Activated CD4-positive, alpha-beta memory T cell treated with anti-CD3 and anti-CD28 coated beads, Interleukin-2, amount 10 ng/mL, durations not matched to agents 7 days and 5 days (primary cell): ENCODE measurements at regions of chr9 and their contacts with region 1.

Region 1: GRCh38 chr9:124852829-124853531 is at the start of gene WDR38:
- DNase-seq: peak; percentile 76
- H3K4me3 Mint-ChIP-seq: peak within 1 kb of the TSS; percentile 56
- H3K27ac Mint-ChIP-seq: no peak within 1 kb of the TSS
- H3K4me1 Mint-ChIP-seq: peaks cover 17% of the 10 kb centered on the region
- H3K27me3 Mint-ChIP-seq: peaks cover 10% of the 10 kb centered on the region
- total RNA-seq, gene WDR38: not detected

Region 2: DNA sequence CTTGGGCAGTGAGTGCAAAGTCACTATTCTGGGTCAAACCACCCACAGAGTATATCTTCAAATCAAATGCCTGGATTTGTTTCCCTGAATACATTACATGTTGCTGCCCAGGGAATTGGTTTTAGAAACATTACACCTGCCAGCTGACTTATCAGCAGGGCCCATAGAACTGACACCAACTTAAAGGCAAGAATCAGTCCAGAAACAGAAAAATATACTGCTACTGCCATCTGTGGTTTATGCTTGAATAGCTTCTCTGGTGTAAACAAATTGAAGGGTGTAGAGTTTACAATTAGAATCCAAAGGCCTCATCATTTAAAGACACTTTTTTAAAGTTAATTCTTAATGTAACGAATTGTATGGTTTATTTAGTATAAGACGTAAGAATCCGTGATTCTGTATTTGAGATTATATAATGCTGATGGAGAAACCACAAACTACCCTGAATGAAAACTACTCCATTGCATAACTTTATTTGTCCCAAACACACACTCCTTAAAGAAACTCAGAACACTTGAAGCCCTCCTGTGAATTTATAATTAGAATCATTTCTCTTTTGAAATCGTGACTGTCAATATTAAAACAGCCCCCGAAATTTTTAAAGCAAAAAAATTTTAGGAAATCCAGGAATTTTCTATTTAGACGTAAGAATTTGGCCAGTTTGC is 88.1 kb before region 1 on chr9:
- CTCF ChIA-PET with region 1: interaction called, 264 read pairs
- POLR2A ChIA-PET with region 1: interaction called, 66 read pairs
- DNase-seq: no peak
- H3K4me3 Mint-ChIP-seq: no peak overlapping the region
- H3K27ac Mint-ChIP-seq: no peak overlapping the region
- H3K4me1 Mint-ChIP-seq: peaks cover 10% of the 10 kb centered on the region
- H3K27me3 Mint-ChIP-seq: peaks cover 82% of the 10 kb centered on the region

Region 3: GRCh38 chr9:124779362-124780059 is 73.5 kb before region 1 on chr9:
- CTCF ChIA-PET with region 1: interaction called, 264 read pairs
- POLR2A ChIA-PET with region 1: interaction called, 66 read pairs
- DNase-seq: peak; percentile 7
- H3K4me3 Mint-ChIP-seq: no peak overlapping the region
- H3K27ac Mint-ChIP-seq: no peak overlapping the region
- H3K4me1 Mint-ChIP-seq: peaks cover 13% of the 10 kb centered on the region
- H3K27me3 Mint-ChIP-seq: peaks cover 28% of the 10 kb centered on the region

Region 4: DNA sequence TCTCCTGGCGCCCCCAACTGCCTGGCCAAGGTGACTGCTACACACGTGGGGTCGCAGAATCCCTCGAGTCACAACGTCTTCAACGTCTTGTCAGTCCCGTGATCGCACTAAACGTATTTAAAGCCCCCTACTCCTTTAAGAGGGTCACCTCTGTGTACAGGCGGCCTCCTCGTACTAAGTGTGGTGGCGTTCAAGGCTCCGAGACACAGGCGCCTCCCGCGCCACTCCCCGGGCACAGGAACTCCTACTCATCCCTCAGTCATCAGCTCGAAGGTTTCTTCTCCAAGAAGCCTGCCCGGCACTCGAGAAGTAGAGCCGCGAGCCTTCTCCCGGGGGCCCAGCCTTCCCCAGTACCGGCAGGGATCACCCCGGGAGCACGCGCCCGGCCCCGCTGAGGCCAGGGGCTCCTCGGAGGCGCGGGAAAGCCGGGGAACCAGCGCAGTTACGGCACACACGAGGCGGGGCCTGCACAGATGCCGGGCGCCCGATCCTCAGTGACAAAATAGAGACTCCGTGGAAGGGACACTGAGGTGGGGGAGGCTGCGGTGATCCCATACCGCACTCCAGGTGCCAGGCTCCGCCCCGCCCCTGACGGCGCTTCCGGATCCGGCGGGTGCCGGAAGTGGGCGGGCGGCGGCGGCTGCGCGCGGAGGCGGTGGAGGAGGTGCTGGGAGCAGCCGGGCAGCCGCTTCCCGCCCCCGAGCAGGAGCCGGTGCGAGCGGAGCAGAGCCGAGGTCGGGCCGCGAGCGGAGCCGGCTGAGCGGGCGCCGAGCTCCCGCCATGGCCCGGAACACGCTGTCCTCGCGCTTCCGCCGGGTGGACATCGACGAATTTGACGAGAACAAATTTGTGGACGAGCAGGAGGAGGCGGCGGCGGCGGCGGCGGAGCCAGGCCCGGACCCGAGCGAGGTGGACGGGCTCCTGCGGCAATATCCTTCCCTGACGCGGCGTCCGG is 15.8 kb after region 1 on chr9:
- CTCF ChIA-PET with region 1: interaction called, 16 read pairs
- POLR2A ChIA-PET with region 1: interaction called, 210 read pairs
- DNase-seq: peak; percentile 90
- H3K4me3 Mint-ChIP-seq: peak overlapping the region; percentile 88
- H3K27ac Mint-ChIP-seq: peak overlapping the region; percentile 100
- H3K4me1 Mint-ChIP-seq: peaks cover 54% of the 10 kb centered on the region
- H3K27me3 Mint-ChIP-seq: no peaks in the 10 kb centered on the region

Region 5: GRCh38 chr9:124894741-124895170 is 41.8 kb after region 1 on chr9:
- CTCF ChIA-PET with region 1: interaction called, 15 read pairs
- POLR2A ChIA-PET with region 1: interaction called, 3 read pairs
- DNase-seq: peak; percentile 44
- H3K4me3 Mint-ChIP-seq: no peak overlapping the region
- H3K27ac Mint-ChIP-seq: peak overlapping the region; percentile 63
- H3K4me1 Mint-ChIP-seq: peaks cover 1% of the 10 kb centered on the region
- H3K27me3 Mint-ChIP-seq: no peaks in the 10 kb centered on the region